ENCODE measurements at regions of chr1 and their contacts with region 1.

Region 1: DNA sequence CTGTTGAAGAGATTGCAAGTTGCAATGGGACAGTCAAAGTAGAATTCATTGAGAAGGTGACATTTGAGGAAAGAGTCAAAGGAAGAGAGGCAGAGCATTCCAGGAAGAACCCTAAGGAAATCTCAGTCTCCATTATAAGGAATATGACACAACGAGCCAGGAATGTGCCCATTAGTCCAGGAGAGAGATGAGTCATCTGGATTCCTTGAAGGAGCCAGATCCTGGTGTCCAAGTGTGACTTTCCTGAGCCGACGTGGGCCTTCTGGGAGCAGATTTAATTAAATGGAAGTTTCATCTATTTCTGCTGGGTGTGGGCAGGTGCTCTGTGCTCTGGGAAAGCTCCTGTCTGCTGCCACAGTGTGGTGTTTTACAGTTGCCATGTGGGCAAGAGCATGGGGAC is 111.6 kb upstream of the ARTN start:
- DNase-seq: peak; percentile 83
- H3K4me3 ChIP-seq: no peak overlapping the region
- H3K27ac ChIP-seq: peak overlapping the region; percentile 87
- H3K4me1 ChIP-seq: peaks cover 28% of the 10 kb centered on the region
- H3K27me3 ChIP-seq: no peaks in the 10 kb centered on the region
- CTCF ChIP-seq: no peak
- POLR2A ChIP-seq: no peak

Region 2: DNA sequence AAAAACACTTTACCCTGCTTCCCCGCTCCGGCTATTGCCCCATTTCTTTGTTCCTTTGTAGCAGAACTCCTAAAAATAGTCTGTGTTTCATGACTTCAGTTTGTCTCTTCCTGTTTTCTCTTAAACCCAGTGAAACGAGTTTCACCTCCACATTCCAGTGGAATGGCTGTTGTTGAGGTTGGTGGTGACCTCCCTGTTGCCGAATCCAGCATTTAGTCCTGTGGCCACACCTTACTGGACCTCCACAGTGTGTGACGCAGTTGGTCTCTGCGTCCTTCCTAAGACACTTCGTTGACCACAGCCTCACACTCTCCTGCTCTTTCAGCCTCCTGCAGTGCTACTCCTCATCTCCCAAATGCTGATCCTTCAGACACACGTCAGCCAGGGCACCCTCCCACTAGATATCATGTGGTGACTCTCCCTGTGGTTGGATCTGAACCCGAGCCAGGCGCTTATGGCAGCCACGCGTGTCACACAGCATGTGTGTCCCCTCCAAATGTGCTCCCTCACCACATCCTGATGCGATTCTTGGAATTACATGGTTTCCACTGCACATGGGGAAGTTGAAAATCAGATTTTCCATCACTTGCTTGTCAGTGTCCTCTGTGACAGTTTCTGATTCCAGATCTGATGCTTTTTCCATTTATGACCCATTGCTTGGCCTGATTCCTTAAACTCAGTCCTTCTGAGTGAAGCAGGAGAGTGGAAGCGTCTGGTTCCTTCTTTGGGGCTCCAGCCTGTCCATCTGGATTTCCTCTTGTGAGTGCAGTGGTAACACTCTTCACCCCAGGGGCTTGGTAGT is 12.4 kb after region 1 on chr1:
- CTCF ChIA-PET with region 1: no interaction called
- POLR2A ChIA-PET with region 1: no interaction called
- dilution Hi-C with region 1: no loop called
- intact Hi-C with region 1: loop called (anchors 1 kb)
- DNase-seq: peak; percentile 13
- H3K4me3 ChIP-seq: no peak overlapping the region
- H3K27ac ChIP-seq: no peak overlapping the region
- H3K4me1 ChIP-seq: peaks cover 11% of the 10 kb centered on the region
- H3K27me3 ChIP-seq: no peaks in the 10 kb centered on the region
- CTCF ChIP-seq: no peak
- POLR2A ChIP-seq: no peak

Measured in endothelial cell of umbilical vein (primary cell).